Aorta (tissue), 5 donors: ENCODE measurements at regions of chr16 and their contacts with region 1.

Region 1: DNA sequence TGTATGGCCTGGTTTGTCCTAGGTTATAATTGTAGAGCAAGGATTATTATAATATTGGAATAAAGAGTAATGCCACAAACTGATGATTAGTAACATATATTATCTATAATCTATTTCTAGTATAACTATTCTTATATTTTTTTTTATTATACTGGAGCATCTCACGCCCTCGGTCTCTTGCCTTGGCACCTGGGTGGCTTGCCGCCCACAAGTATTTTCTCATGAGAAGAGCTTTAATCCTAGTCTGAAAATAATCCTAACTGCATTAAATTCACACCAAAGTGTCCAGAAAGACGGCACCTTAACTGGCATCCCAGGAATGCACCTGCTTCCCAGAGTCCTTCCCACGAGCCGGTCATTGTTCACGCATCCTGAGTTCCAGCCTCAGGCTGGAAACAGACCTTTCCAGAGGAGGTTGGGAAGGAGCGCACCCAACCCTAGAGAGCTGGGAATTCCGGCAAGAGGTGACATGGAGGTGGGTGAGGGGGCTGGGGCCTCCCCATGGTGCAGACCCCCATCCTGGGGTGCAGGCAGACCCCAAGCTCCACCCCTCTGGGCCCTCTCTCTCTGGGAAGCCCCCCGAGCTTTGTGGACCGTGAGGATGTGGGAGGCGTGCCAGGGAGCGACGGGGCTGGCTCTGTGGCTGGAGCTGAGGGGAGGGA is 15.9 kb downstream of the CHMP1A start:
- DNase-seq: no peak
- ATAC-seq: no peak
- H3K4me3 ChIP-seq: no peak overlapping the region
- H3K27ac ChIP-seq: no peak overlapping the region
- H3K4me1 ChIP-seq: no peaks in the 10 kb centered on the region
- H3K27me3 ChIP-seq: no peaks in the 10 kb centered on the region

Region 2: DNA sequence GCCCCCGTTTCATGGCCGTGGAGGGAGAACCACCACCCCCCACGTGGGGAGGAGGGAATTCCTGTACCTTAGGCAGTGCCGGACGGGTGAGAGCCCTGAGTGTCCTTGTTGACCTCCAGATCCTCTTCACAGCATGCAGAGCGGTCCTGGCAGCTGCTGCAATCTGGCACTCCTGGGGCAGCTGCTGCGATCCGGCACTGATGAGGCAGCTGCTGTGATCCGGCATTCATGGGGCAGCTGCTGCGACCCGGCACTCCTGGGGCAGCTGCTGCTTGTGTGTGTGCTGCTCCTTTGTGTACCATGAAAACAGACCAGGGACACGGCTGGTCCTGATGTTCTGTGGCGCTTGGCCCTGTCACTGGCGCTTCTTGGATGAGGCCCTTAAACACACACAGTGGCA is 411.3 kb before region 1 on chr16:
- intact Hi-C with region 1: loop called in 1 of 2 experiments (anchors 10 kb)
- DNase-seq: peak in 1 of 2 donors; percentile 51
- ATAC-seq: no peak
- H3K4me3 ChIP-seq: no peak overlapping the region
- H3K27ac ChIP-seq: no peak overlapping the region
- H3K4me1 ChIP-seq: no peaks in the 10 kb centered on the region
- H3K27me3 ChIP-seq: no peaks in the 10 kb centered on the region

Region 3: GRCh38 chr16:89909777-89910716 is 268.5 kb after region 1 on chr16:
- intact Hi-C with region 1: no loop called
- DNase-seq: peak; percentile 86 to 91
- ATAC-seq: peak; percentile 82
- H3K4me3 ChIP-seq: no peak overlapping the region
- H3K27ac ChIP-seq: no peak overlapping the region
- H3K4me1 ChIP-seq: no peaks in the 10 kb centered on the region
- H3K27me3 ChIP-seq: no peaks in the 10 kb centered on the region